HepG2 (cell line): ENCODE measurements at regions of chr2 and their contacts with region 1.

Region 1: GRCh38 chr2:232592772-232593395 is 40.5 kb upstream of the EFHD1 start:
- DNase-seq: peak; percentile 29
- ATAC-seq: peak; percentile 83
- H3K4me3 ChIP-seq: no peak overlapping the region
- H3K27ac ChIP-seq: no peak overlapping the region
- H3K4me1 ChIP-seq: no peaks in the 10 kb centered on the region; the same call in 1 of the 2 replicates
- H3K27me3 ChIP-seq: no peaks in the 10 kb centered on the region; a peak in 1 of 5 replicates
- CTCF ChIP-seq: peak; percentile 63
- EP300 ChIP-seq: no peak
- POLR2A ChIP-seq: no peak
- RAD21 ChIP-seq: 0 out of 2 replicates have a peak, but pooled peaks have one; percentile 25

Region 2: DNA sequence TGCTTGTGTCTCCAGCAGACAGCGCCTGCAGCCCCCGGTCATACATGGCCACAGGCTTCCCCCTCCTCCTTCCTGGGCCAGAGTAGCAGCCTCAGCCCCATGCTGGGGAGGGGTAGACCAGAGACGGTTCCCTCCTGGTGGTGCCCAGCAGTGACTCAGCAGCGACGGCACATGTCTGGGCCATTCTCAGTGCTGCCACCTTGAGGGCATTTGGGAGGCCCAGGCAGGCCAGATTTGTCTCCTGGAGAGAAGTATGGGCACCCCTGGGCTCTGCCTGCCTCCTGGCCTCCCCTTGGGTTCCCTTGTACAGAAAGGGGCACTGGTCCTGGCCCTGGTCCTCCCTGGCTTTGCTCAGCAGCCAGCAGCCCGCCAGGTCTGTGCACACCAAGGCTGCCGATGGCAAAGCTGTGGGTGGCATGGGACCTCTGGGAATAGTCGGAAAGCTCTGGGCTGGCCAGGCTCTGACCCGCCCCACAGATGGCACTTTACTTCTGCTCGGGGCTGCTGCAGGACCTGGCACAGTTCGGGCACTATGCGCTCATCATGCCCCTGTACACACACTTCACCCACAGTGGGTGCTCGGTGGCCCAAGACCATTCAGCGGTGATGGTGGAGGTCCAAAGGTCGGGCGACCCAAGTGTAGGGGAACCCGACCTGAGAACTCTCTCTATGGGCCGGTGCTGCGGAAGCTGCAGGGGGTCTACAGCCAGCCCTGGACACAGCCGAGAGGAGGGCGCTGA is 148.3 kb before region 1 on chr2:
- CTCF ChIA-PET with region 1: no interaction called
- POLR2A ChIA-PET with region 1: no interaction called
- in situ Hi-C with region 1: no loop called
- intact Hi-C with region 1: no loop called
- DNase-seq: peak; percentile 56
- ATAC-seq: peak; percentile 32
- H3K4me3 ChIP-seq: peak overlapping the region; percentile 8 to 73 (median 18)
- H3K27ac ChIP-seq: no peak overlapping the region
- H3K4me1 ChIP-seq: peaks cover 28% of the 10 kb centered on the region
- H3K27me3 ChIP-seq: peaks cover 3 to 22% of the 10 kb centered on the region in 2 experiments; a peak in 4 of 5 replicates
- CTCF ChIP-seq: peak; percentile 63
- EP300 ChIP-seq: no peak
- POLR2A ChIP-seq: no peak
- RAD21 ChIP-seq: 0 out of 2 replicates have a peak, but pooled peaks have one; percentile 28

Region 3: GRCh38 chr2:232502911-232503808 is 89.7 kb before region 1 on chr2:
- CTCF ChIA-PET with region 1: no interaction called
- POLR2A ChIA-PET with region 1: no interaction called
- in situ Hi-C with region 1: no loop called
- intact Hi-C with region 1: no loop called
- DNase-seq: no peak
- ATAC-seq: peak; percentile 56
- H3K4me3 ChIP-seq: peak overlapping the region; percentile 45 to 67 (median 52); a peak in 5 of 6 replicates
- H3K27ac ChIP-seq: no peak overlapping the region
- H3K4me1 ChIP-seq: peaks cover 11% of the 10 kb centered on the region
- H3K27me3 ChIP-seq: peaks cover 19 to 92% of the 10 kb centered on the region in 2 experiments
- CTCF ChIP-seq: no peak
- EP300 ChIP-seq: no peak
- POLR2A ChIP-seq: no peak
- RAD21 ChIP-seq: no peak

Region 4: GRCh38 chr2:232537079-232537478 is 55.8 kb before region 1 on chr2:
- CTCF ChIA-PET with region 1: no interaction called
- POLR2A ChIA-PET with region 1: no interaction called
- in situ Hi-C with region 1: no loop called
- intact Hi-C with region 1: loop called (anchors 1 kb)
- DNase-seq: peak; percentile 48
- ATAC-seq: peak; percentile 51
- H3K4me3 ChIP-seq: no peak overlapping the region
- H3K27ac ChIP-seq: no peak overlapping the region
- H3K4me1 ChIP-seq: 0 out of 2 replicates have a peak, but pooled peaks cover 6% of the 10 kb centered on the region
- H3K27me3 ChIP-seq: peaks cover 0 to 20% of the 10 kb centered on the region in 2 experiments; a peak in 2 of 5 replicates
- CTCF ChIP-seq: peak; percentile 68
- EP300 ChIP-seq: no peak
- POLR2A ChIP-seq: no peak
- RAD21 ChIP-seq: peak; percentile 32; the same call in 1 of the 2 replicates

Region 5: GRCh38 chr2:232668805-232669444 is 76.0 kb after region 1 on chr2:
- CTCF ChIA-PET with region 1: no interaction called
- POLR2A ChIA-PET with region 1: no interaction called
- in situ Hi-C with region 1: no loop called
- intact Hi-C with region 1: no loop called
- DNase-seq: peak; percentile 38
- ATAC-seq: peak; percentile 85
- H3K4me3 ChIP-seq: 0 out of 6 replicates have a peak overlapping the region, but pooled peaks of 1 of the 3 experiments have one; percentile 8
- H3K27ac ChIP-seq: no peak overlapping the region
- H3K4me1 ChIP-seq: no peaks in the 10 kb centered on the region
- H3K27me3 ChIP-seq: no peaks in the 10 kb centered on the region
- CTCF ChIP-seq: peak; percentile 88
- EP300 ChIP-seq: no peak
- POLR2A ChIP-seq: no peak
- RAD21 ChIP-seq: peak; percentile 67